ENCODE measurements at regions of chr1 and their contacts with region 1.

Region 1: GRCh38 chr1:16440470-16441281 is at the start of gene NECAP2:
- DNase-seq: peak; percentile 88 to 93
- H3K4me3 ChIP-seq: peak within 1 kb of the TSS; percentile 37 to 89 (median 81)
- H3K27ac ChIP-seq: peak within 1 kb of the TSS in 2 of 3 donors; percentile 47 to 81
- H3K4me1 ChIP-seq: peaks cover 7% of the 10 kb centered on the region in 2 donors
- H3K27me3 ChIP-seq: no peaks in the 10 kb centered on the region
- CTCF ChIP-seq: peak; percentile 78 to 92 (median 84)
- POLR2A ChIP-seq: peak in 1 of 2 donors; percentile 56
- total RNA-seq, gene NECAP2: 43.8 to 56.8 (median 48.6) TPM

Region 2: DNA sequence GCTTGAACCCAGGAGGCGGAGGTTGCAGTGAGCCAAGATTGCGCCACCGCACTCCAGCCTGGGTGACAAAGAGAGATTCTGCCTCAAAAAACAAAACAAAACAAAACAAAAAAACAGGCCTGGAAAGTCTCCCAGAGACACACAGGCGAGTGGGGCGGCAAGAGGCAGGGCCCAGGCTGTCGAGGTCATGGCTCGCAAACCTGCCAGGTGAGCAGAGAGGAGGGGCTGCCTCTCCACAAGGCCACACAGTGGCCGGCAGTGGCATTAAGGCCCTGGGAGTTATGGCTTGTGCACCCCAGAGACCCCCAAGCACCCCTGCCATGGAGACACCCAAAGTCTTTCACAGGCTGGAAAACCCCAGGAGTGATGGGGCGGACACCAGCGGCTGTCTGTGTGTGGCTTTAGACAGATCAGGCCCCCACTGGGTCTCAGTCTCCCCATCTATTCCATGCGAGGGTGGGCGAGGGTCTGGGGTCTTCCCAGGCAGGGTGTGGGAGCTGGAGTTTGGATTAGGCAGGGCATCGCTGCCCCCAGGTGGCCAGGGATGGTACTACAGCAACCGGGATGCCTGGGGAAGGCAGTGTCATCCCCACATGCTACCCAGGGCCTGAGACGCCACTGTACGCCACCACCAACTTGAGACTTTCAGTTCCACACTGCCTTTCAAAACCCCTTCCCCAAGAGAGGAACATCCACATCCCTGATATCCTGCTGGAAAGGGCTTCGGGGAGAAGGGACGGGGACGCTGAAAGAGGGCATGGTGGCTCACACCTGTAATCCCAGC is 1009.7 kb before region 1 on chr1:
- intact Hi-C with region 1: no loop called
- DNase-seq: peak; percentile 59 to 65
- H3K4me3 ChIP-seq: no peak overlapping the region
- H3K27ac ChIP-seq: no peak overlapping the region
- H3K4me1 ChIP-seq: no peaks in the 10 kb centered on the region
- H3K27me3 ChIP-seq: no peaks in the 10 kb centered on the region
- CTCF ChIP-seq: peak; percentile 85 to 97 (median 95)
- POLR2A ChIP-seq: no peak

Region 3: DNA sequence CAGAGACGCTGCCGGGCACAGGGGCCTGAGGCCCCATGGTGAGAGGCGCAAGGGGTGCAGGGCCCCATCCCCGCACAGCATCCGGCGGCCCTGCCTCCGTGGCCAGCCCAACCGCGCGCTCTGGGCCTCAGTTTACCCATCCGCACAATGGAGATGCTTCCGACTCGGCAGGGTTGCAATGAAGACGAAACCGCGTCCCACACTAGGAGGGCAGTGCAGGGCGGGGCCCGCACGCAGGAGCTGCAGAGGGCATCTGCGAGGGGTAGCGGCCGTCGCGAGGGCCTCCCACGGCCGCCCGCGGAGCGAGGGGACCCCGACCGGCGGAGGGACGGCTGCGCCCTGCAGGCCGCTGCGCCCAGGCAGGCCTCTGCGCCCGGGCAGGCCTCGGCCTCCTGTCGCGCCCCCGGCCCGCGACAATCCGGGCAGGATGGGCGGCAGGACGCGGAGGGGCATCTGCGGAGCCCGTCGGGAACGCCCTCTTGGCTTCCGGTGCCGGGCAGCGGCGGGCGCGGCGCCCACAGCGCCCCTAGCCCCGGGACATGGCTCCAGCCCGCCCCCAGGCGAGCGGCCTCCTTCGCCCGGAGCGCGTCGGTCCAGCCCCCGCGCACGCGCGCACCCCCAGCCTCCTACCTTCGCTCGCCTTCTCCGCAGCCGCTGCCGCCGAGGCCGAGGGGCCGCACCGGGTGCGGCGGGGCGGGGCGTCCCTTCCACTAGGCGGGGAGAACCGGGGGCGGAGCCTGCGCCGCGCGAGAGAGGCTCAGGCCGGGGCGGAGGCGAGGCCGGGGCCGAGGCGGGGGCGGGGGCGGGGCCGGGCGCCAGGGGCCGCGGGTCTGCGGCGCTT is 58.1 kb after region 1 on chr1:
- intact Hi-C with region 1: loop called (anchors 10 kb)
- DNase-seq: peak; percentile 90 to 92
- H3K4me3 ChIP-seq: peak overlapping the region; percentile 79 to 87 (median 81)
- H3K27ac ChIP-seq: peak overlapping the region; percentile 49 to 80 (median 74)
- H3K4me1 ChIP-seq: peaks cover 3 to 5% of the 10 kb centered on the region in 2 donors
- H3K27me3 ChIP-seq: no peaks in the 10 kb centered on the region
- CTCF ChIP-seq: peak in 1 of 6 experiments; percentile 18
- POLR2A ChIP-seq: peak in 1 of 2 donors; percentile 78